IMR-90 (cell line): ENCODE measurements at regions of chr11 and their contacts with region 1.

Region 1: DNA sequence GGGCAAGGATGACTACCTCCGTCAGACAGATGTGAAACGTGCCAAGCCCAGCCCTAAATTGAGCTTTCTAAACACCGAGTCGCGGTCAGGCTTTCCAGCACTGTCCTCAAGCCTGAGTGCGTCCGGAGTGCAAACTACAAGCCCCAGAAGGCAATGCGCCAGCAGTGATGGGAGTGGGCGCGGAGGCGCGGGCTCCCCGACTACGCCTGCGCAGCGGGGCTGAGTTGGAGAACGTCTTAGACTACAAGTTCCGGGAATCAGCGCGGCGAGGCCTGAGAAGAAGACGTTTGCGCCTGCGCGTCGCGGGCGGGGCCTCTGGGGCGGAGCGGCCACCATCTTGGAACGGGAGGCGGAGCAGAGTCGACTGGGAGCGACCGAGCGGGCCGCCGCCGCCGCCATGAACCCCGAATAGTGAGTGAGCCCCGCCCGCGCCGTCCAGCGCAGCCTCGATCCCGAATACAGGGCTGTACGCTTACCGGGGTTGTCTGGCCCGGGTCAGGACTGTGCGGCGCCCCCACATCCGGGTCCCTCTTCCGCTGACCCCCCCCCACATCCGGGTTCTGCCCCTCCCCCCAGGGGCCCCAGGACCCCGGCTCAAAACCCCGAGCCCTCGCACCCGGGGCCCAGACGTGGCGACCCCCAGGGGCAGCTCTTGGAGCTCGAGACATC is at the start of gene RAB1B:
- DNase-seq: peak; percentile 99
- ATAC-seq: peak; percentile 82
- H3K4me3 ChIP-seq: peak within 1 kb of the TSS; percentile 63
- H3K27ac ChIP-seq: peak within 1 kb of the TSS; percentile 94
- H3K4me1 ChIP-seq: peaks cover 4% of the 10 kb centered on the region; the same call in 1 of the 2 replicates
- H3K27me3 ChIP-seq: no peaks in the 10 kb centered on the region
- CTCF ChIP-seq: no peak
- POLR2A ChIP-seq: 0 out of 2 replicates have a peak, but pooled peaks have one; percentile 30
- RAD21 ChIP-seq: no peak
- total RNA-seq, gene RAB1B: 76.9 and 83.7 TPM in 2 replicates

Region 2: DNA sequence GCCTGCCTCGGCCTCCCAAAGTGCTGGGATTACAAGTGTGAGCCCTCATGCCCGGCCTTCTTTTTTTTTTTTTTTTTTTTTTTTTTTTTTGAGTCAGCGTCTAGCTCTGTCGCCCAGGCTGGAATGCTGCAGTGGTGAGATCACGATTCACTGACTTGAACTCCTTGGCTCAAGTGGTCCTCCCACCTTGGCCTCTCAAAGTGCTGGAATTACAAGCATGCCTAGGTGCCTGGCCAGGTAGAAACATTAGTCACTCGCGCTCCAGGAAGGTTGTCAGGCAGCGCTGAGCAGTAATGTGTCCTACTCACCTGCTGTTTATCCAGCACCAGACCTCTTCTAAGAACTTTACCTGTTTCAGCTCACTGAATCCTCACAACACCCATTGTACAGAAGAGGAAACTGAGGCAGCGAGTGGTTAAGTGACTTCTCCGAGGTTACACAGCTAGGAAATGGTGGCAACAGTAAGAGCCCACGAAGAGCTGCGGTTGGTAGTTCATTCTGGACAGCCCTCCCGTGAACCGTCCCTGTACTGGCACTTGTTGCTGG is 257.1 kb before region 1 on chr11:
- CTCF ChIA-PET with region 1: no interaction called
- POLR2A ChIA-PET with region 1: interaction called, 12 read pairs
- dilution Hi-C with region 1: no loop called
- in situ Hi-C with region 1: no loop called
- intact Hi-C with region 1: no loop called
- DNase-seq: peak; percentile 53
- ATAC-seq: no peak
- H3K4me3 ChIP-seq: no peak overlapping the region
- H3K27ac ChIP-seq: no peak overlapping the region
- H3K4me1 ChIP-seq: peaks cover 9% of the 10 kb centered on the region
- H3K27me3 ChIP-seq: peaks cover 13% of the 10 kb centered on the region
- CTCF ChIP-seq: no peak
- POLR2A ChIP-seq: no peak
- RAD21 ChIP-seq: no peak

Region 3: DNA sequence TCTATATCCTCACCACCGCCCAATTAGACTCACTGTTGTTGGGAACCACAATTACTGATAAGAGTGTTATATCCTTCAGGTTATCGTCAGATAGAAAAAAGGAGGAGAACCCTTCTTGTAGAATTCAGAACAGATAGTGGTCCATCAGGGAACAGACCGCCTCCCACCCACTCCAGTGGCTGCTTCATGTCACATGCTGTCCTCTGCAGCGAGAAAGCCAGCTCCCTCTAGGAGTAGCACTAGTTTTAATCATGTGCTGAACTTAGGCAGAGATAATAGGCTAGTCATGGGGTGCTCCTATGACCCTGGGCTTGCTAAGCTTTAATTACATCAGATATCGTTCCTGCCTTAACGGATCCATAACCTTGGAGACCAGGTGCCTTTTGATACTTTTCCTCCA is 51.5 kb before region 1 on chr11:
- CTCF ChIA-PET with region 1: no interaction called
- POLR2A ChIA-PET with region 1: no interaction called
- dilution Hi-C with region 1: no loop called
- in situ Hi-C with region 1: no loop called
- intact Hi-C with region 1: no loop called
- DNase-seq: no peak
- ATAC-seq: no peak
- H3K4me3 ChIP-seq: no peak overlapping the region
- H3K27ac ChIP-seq: no peak overlapping the region
- H3K4me1 ChIP-seq: no peaks in the 10 kb centered on the region
- H3K27me3 ChIP-seq: no peaks in the 10 kb centered on the region
- CTCF ChIP-seq: no peak
- POLR2A ChIP-seq: no peak
- RAD21 ChIP-seq: no peak